AG04449 (cell line): ENCODE measurements at regions of chr5 and their contacts with region 1.

Region 1: GRCh38 chr5:5141625-5142532 is 1.7 kb downstream of the ADAMTS16 start:
- DNase-seq: no peak
- H3K4me3 ChIP-seq: no peak overlapping the region
- CTCF ChIP-seq: peak; percentile 40

Region 2: GRCh38 chr5:5398046-5398445 is 256.2 kb after region 1 on chr5:
- CTCF ChIA-PET with region 1: interaction called, 85 read pairs
- POLR2A ChIA-PET with region 1: no interaction called
- DNase-seq: no peak
- H3K4me3 ChIP-seq: no peak overlapping the region
- CTCF ChIP-seq: no peak

Region 3: GRCh38 chr5:5414999-5415398 is 273.1 kb after region 1 on chr5:
- CTCF ChIA-PET with region 1: interaction called, 112 read pairs
- POLR2A ChIA-PET with region 1: no interaction called
- DNase-seq: no peak
- H3K4me3 ChIP-seq: no peak overlapping the region
- CTCF ChIP-seq: no peak